ENCODE measurements at regions of chr2 and their contacts with region 1.

Region 1: GRCh38 chr2:176140513-176141317 is 10.6 kb upstream of the HOXD4 start:
- DNase-seq: peak; percentile 88
- ATAC-seq: peak; percentile 81
- H3K4me3 Mint-ChIP-seq: peak overlapping the region; percentile 62
- H3K27ac Mint-ChIP-seq: no peak overlapping the region
- H3K4me1 Mint-ChIP-seq: peaks cover 6% of the 10 kb centered on the region
- H3K27me3 Mint-ChIP-seq: peaks cover 98% of the 10 kb centered on the region
- CTCF ChIP-seq: peak; percentile 91

Region 2: GRCh38 chr2:176126929-176127773 is 13.6 kb before region 1 on chr2:
- CTCF ChIA-PET with region 1: interaction called, 14 read pairs
- POLR2A ChIA-PET with region 1: no interaction called
- DNase-seq: peak; percentile 69
- ATAC-seq: no peak
- H3K4me3 Mint-ChIP-seq: no peak overlapping the region
- H3K27ac Mint-ChIP-seq: no peak overlapping the region
- H3K4me1 Mint-ChIP-seq: peaks cover 23% of the 10 kb centered on the region
- H3K27me3 Mint-ChIP-seq: peaks cover 98% of the 10 kb centered on the region
- CTCF ChIP-seq: peak; percentile 82

Region 3: GRCh38 chr2:176178038-176178756 is 37.5 kb after region 1 on chr2:
- CTCF ChIA-PET with region 1: interaction called, 31 read pairs
- POLR2A ChIA-PET with region 1: no interaction called
- DNase-seq: no peak
- ATAC-seq: peak; percentile 60
- H3K4me3 Mint-ChIP-seq: peak overlapping the region; percentile 67
- H3K27ac Mint-ChIP-seq: no peak overlapping the region
- H3K4me1 Mint-ChIP-seq: peaks cover 39% of the 10 kb centered on the region
- H3K27me3 Mint-ChIP-seq: peaks cover 100% of the 10 kb centered on the region
- CTCF ChIP-seq: no peak

Region 4: GRCh38 chr2:176491172-176491904 is 350.6 kb after region 1 on chr2:
- CTCF ChIA-PET with region 1: interaction called, 14 read pairs
- POLR2A ChIA-PET with region 1: no interaction called
- DNase-seq: no peak
- ATAC-seq: no peak
- H3K4me3 Mint-ChIP-seq: no peak overlapping the region
- H3K27ac Mint-ChIP-seq: no peak overlapping the region
- H3K4me1 Mint-ChIP-seq: peaks cover 24% of the 10 kb centered on the region
- H3K27me3 Mint-ChIP-seq: peaks cover 47% of the 10 kb centered on the region
- CTCF ChIP-seq: no peak

Region 5: GRCh38 chr2:176638167-176639015 is 497.7 kb after region 1 on chr2:
- CTCF ChIA-PET with region 1: interaction called, 30 read pairs
- POLR2A ChIA-PET with region 1: no interaction called
- DNase-seq: peak; percentile 59
- ATAC-seq: peak; percentile 70
- H3K4me3 Mint-ChIP-seq: peak overlapping the region; percentile 69
- H3K27ac Mint-ChIP-seq: no peak overlapping the region
- H3K4me1 Mint-ChIP-seq: peaks cover 20% of the 10 kb centered on the region
- H3K27me3 Mint-ChIP-seq: peaks cover 94% of the 10 kb centered on the region
- CTCF ChIP-seq: peak; percentile 73